ENCODE measurements at regions of chr17 and their contacts with region 1.

Region 1: DNA sequence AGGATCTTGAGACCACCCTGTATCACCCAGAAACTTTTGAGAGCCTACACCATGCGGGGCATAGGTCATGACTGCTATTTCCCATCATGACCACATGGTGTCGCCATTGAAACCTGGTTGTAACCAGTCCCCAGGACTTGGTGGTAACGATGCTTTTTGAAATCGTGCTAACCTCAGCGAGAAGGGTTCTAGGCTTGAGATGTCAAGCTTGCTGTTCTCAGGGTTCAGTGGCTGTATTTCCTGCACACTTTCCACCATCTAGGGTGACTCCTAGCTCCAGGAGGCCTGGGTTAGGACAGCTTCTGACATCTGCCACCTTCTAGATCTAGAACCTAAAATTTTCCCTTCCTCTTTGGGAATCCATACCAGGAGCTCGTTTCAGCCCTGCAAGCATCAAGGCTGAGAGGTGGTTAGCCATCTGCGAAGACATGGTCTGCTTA is 13.0 kb upstream of the SPNS3 start:
- DNase-seq: peak; percentile 56 to 67
- H3K4me3 ChIP-seq: no peak overlapping the region
- H3K27ac ChIP-seq: no peak overlapping the region
- H3K4me1 ChIP-seq: peaks cover 4% of the 10 kb centered on the region; the same call in 1 of the 2 replicates
- H3K27me3 ChIP-seq: no peaks in the 10 kb centered on the region
- CTCF ChIP-seq: peak; percentile 98

Region 2: DNA sequence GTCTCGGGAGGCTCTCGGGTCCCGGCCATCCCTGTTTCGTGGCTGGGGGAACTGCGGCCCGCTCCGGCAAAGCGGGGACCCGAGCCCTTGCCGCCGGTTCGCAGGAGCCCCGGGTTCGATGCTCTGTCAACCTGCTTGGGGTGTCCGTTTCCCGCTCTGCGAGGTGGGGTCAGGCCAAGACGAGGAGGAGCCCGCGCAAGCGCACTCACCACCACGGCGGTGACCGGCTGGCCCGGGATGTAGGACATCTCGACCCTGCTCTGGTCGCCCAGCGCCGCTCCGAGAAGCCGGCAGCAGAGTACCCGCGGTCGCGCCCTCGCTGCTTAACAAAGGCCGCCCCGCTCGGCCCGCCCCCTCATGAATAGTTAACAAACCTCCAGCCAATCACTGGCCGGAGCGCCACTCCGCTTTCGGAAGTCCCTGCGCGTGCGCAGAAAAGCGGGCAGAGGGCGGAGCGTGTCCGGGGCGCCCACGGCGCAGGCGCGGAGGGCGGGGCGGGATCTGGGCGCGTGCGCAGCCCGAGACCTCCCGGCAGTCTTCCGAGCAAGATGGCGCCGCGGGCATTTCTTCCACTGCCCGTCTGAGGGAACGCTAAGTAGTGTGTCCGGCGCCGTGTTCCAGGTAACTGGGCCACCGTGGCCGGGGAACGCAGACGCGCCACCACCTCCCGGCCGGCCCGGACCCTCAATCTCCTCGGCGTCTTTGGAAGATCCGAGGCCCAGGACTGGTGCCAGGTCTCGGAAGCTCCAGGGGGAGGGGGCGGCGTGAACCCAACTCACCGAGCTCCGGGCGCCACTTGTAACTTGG is 752.2 kb before region 1 on chr17 and contains the starts of genes EMC6 and TAX1BP3:
- CTCF ChIA-PET with region 1: no interaction called
- POLR2A ChIA-PET with region 1: no interaction called
- intact Hi-C with region 1: no loop called
- DNase-seq: peak; percentile 92 to 100
- H3K4me3 ChIP-seq: peak within 1 kb of the TSS; percentile 95
- H3K27ac ChIP-seq: peak within 1 kb of the TSS; percentile 88
- H3K4me1 ChIP-seq: peaks cover 25% of the 10 kb centered on the region
- H3K27me3 ChIP-seq: no peaks in the 10 kb centered on the region
- CTCF ChIP-seq: no peak; the same call in 1 of the 2 replicates
- total RNA-seq, gene EMC6: 89.6 and 89.9 TPM in 2 replicates
- total RNA-seq, gene TAX1BP3: 147 and 168 TPM in 2 replicates

Region 3: DNA sequence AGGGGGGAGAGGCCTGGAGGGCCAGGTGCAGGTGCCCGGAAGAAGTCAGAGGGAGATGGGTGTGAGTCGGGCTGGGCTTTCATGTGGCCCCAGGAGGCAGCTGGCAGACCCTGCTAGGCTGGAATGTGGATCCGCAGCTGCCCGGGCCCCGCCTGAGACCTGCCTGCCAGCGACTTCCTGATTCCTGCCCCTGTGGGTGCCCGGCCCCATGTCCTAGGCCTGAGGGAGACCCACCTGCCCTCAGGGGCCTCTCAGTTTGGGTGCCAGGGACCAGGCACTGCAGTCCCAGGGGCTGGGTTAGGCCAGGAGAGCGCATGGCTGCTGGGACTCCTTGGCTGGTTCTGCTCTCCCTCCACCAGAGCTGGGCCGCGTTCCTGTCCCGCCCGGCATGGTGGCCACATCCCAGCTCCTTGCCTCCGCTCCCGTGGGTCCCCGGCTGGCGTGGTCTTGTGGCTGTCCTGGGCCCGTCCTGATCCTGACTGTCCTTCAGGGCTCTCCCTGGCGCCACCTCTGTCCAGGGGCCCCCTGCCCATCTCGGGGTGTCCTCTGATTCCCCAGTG is 55.9 kb after region 1 on chr17:
- CTCF ChIA-PET with region 1: interaction called, 12 read pairs
- POLR2A ChIA-PET with region 1: no interaction called
- intact Hi-C with region 1: loop called (anchors 2 kb)
- DNase-seq: peak; percentile 92 to 96
- H3K4me3 ChIP-seq: peak overlapping the region; percentile 49; the same call in 1 of the 2 replicates
- H3K27ac ChIP-seq: peak overlapping the region; percentile 93
- H3K4me1 ChIP-seq: peaks cover 70% of the 10 kb centered on the region
- H3K27me3 ChIP-seq: no peaks in the 10 kb centered on the region
- CTCF ChIP-seq: no peak

Region 4: DNA sequence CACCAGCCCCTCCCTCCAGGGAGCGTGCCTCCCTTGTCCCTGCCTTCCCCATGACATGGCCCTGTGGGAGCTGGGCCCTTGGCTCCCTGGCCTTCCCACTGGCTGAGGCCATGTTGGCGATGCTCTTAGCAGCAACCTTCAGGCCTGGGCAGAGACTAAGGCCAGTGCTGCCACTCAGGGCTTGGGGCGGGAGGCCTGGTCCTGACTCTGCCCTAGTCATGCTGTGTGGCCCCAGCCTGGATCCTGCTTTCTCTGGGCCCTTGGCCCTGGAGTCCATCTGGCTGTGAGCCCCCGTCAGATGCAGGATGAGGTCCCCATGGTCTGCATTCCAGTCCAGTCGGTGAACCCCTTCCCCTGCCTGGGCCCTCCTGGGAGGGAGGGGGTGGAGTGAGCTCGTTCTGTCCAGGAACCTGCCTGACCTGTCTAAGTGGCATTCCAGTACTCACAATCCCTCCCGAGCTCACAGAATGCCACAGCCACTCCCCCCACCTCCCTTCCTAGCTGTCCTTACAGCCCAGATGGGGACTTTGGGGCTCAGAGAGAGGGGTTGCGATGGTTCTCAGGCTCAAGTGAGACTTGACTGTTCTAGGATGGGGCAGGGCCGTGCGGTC is 93.4 kb after region 1 on chr17:
- CTCF ChIA-PET with region 1: interaction called, 13 read pairs
- POLR2A ChIA-PET with region 1: interaction called, 3 read pairs
- intact Hi-C with region 1: loop called (anchors 1 kb)
- DNase-seq: peak; percentile 92 to 93
- H3K4me3 ChIP-seq: peak overlapping the region; percentile 47; the same call in 1 of the 2 replicates
- H3K27ac ChIP-seq: peak overlapping the region; percentile 100
- H3K4me1 ChIP-seq: peaks cover 79% of the 10 kb centered on the region
- H3K27me3 ChIP-seq: no peaks in the 10 kb centered on the region
- CTCF ChIP-seq: no peak

Region 5: GRCh38 chr17:4565209-4566141 is 144.8 kb after region 1 on chr17:
- CTCF ChIA-PET with region 1: interaction called, 5 read pairs
- POLR2A ChIA-PET with region 1: no interaction called
- intact Hi-C with region 1: loop called (anchors 1 kb)
- DNase-seq: peak; percentile 54 to 70
- H3K4me3 ChIP-seq: no peak overlapping the region
- H3K27ac ChIP-seq: no peak overlapping the region
- H3K4me1 ChIP-seq: peaks cover 4% of the 10 kb centered on the region; the same call in 1 of the 2 replicates
- H3K27me3 ChIP-seq: no peaks in the 10 kb centered on the region
- CTCF ChIP-seq: peak; percentile 94

Region 6: DNA sequence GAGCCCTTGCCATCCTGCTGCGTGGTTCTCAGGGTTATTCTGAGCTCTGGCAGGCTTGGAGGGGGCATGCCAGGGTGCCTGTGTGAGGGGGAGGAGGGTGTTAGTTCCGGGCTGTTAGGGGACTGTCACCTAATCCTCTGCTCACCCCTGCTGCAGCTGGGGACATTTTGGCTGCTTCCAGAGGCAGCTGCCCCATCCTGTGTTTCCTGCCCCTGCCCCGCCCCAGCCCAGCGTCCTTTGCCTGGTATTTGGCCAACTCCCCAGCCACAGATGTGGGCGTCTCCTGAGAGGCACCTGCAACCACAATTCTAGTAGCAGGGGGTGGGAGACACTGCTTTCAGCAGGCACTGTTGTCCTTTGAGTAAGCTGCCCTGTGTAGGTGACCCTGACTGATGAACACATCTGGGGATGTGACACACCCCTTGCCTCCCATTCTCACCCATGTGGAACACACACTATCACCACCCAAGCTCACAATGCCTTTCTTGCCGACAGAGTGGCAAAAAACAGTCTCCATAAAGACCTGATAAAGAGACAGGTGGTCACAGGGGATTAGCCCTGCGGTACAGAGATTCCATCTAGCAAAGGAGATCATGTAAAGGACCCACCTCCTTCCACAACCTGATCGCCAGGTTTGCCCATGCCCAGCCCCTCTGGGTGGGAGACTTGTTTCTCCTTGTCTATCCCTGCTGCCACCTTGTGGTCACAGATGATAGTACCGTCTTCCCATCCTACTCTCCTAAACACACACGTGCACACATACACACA is 482.5 kb after region 1 on chr17 and contains the start of gene CHRNE:
- CTCF ChIA-PET with region 1: no interaction called
- POLR2A ChIA-PET with region 1: no interaction called
- intact Hi-C with region 1: loop called (anchors 10 kb)
- DNase-seq: peak; percentile 62 to 83
- H3K4me3 ChIP-seq: no peak within 1 kb of the TSS
- H3K27ac ChIP-seq: 0 out of 2 replicates have a peak within 1 kb of the TSS, but pooled peaks have one; percentile 7
- H3K4me1 ChIP-seq: peaks cover 13% of the 10 kb centered on the region
- H3K27me3 ChIP-seq: no peaks in the 10 kb centered on the region
- CTCF ChIP-seq: peak; percentile 94
- total RNA-seq, gene CHRNE: 0.23 and 0.24 TPM in 2 replicates

Measured in PC-9 (cell line).